H1 (cell line): ENCODE measurements at regions of chr5 and their contacts with region 1.

Region 1: GRCh38 chr5:139765409-139766217 is 30.0 kb upstream of the PSD2 start:
- DNase-seq: peak in 1 of 2 experiments; percentile 97
- H3K4me3 ChIP-seq: peak overlapping the region; percentile 15 to 73 (median 66); a peak in 7 of 8 replicates
- H3K27ac ChIP-seq: no peak overlapping the region
- H3K4me1 ChIP-seq: peaks cover 9 to 32% (median 15%) of the 10 kb centered on the region in 4 experiments
- H3K27me3 ChIP-seq: peaks cover 8 to 36% (median 26%) of the 10 kb centered on the region in 4 experiments
- CTCF ChIP-seq: peak in 2 of 3 experiments; percentile 65 to 75; a peak in 3 of 4 replicates
- EP300 ChIP-seq: no peak
- POLR2A ChIP-seq: no peak
- RAD21 ChIP-seq: peak; percentile 66 to 71

Region 2: DNA sequence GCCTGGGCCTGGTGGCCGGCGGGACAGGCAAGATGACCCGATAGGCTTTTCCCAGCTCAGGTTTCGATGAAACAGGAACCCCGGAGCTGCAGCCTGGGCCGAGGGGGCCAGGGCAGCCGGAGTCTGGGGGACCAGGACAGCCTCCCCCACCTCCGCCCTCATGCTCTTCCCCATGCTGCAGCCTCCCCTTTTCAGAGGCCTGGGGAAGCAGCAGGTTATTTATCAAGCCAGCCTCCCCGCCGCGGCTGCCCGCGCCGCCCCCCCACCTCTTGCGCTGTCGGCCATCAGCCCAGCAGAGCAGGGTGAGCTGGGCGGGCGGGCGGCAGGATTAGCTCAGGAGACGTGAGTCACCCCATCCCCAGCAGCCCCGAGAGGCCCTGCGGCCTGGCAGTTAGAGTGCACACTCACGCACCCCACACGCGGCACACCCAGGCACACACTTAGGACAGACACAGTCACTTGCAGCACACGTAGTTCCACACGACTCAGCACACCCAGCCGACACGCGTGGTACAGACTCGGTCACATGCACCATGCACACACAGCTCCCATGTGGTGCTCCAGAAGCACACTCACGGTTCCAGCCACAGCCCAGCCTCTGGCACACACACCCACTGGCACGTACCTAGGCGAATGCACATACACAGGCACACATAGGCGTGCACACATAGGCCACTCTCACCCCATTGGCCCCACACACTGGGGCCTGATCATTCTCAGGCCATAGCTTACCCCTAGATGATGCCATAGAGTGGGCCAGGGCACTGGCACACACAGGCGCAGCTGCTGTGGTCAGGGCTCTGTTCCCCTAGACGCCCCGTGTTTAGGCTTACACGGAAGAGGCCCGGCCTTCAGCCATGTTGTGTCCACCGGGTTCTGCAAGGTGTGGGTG is 104.4 kb before region 1 on chr5:
- CTCF ChIA-PET with region 1: interaction called, 24 read pairs
- POLR2A ChIA-PET with region 1: interaction called, 3 read pairs
- DNase-seq: no peak
- H3K4me3 ChIP-seq: no peak overlapping the region
- H3K27ac ChIP-seq: 0 out of 2 replicates have a peak overlapping the region, but pooled peaks have one; percentile 32
- H3K4me1 ChIP-seq: peaks cover 13 to 55% (median 46%) of the 10 kb centered on the region in 4 experiments
- H3K27me3 ChIP-seq: no peaks in the 10 kb centered on the region
- CTCF ChIP-seq: no peak
- EP300 ChIP-seq: no peak
- POLR2A ChIP-seq: no peak
- RAD21 ChIP-seq: no peak

Region 3: DNA sequence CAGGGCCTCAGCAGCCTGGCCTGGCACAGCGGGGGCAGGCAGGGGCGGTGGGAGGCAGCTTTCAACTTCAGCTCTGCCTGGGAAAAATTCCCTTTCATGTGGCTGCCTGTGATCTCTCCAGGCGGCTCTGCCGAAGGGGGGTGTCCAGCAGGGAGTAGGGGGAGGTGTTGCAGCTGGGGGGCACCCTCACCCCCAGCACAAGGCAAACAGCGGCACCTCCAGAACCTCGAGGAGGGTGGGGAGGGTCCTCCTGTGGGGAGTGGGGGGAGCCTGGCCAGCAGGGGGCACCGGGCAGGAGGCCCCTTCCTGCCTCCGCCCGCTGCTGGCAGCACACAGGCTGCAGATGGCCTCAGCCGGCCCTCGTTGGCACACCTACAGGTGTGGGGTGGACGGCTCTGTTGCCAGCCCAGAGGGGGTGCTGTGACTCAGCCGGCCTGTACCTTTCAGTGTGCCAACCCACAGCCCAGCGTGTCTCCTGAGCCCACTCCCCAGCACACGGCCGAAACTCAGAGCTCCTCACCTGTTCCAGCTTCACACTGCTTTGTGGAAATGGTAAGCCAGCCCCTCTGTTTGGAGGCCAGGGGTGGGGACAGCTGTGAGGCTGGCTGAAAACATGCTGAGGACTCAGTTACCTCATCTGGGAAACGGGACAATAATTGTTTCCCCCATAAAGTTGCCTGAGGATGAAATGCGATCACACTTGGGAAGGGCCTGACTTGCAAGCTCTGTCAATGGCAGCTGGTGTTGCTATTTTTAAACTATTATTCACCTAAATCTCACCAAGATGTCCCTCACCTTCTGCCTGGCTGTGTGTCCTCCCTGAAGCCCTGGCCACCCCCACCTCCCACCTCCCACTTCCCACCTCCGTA is 80.5 kb before region 1 on chr5:
- CTCF ChIA-PET with region 1: interaction called, 23 read pairs
- POLR2A ChIA-PET with region 1: interaction called, 4 read pairs
- DNase-seq: no peak
- H3K4me3 ChIP-seq: no peak overlapping the region
- H3K27ac ChIP-seq: no peak overlapping the region
- H3K4me1 ChIP-seq: peaks cover 37 to 67% (median 57%) of the 10 kb centered on the region in 4 experiments
- H3K27me3 ChIP-seq: no peaks in the 10 kb centered on the region
- CTCF ChIP-seq: peak in 1 of 3 experiments; percentile 27; a peak in 2 of 4 replicates
- EP300 ChIP-seq: no peak
- POLR2A ChIP-seq: no peak
- RAD21 ChIP-seq: peak in 1 of 2 experiments; percentile 25; a peak in 2 of 4 replicates

Region 4: DNA sequence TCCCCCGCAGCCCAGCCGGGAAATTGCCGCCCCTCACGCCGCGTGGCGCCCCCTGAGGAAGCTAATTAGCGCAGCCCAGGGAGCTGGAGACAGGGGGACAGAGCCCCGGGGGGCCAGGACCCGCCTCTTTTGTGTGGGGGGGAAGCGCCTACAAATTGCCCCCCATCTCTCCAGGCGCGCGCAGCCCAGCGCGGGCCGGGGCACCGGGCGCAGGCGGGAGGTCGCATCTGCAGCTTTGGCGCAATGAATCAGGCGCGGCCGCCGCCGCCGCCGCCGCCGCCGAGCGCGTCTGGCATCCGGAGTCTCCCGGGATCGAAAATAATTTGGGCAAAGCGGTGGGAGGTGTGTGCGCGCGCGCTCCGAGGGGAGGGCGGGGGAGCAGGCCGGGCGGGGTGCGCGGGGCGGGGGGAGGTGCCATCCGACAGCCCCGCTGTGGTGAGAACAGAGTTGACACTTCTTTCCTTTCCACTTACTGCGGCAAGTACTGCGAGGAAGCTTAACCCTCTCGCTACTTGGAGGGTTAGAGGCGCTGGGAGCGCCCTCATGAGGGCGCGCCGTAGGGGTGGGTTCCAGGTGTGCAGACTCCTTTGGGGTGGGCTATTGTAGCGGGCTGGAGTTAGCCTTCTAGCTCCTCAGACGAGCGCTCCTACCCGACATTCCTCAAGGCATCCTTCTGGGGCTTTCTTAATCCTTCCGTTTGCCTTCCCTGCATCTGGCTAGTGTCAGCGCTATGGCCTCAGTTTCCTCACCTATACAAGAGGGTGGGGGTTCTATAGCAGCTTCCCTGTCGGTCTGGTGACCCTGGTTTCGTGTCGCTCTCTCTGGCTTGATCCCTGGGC is 54.3 kb before region 1 on chr5:
- CTCF ChIA-PET with region 1: interaction called, 31 read pairs
- POLR2A ChIA-PET with region 1: interaction called, 4 read pairs
- DNase-seq: peak in 1 of 2 experiments; percentile 82
- H3K4me3 ChIP-seq: peak overlapping the region; percentile 40 to 79 (median 54)
- H3K27ac ChIP-seq: 0 out of 2 replicates have a peak overlapping the region, but pooled peaks have one; percentile 14
- H3K4me1 ChIP-seq: peaks cover 13 to 34% (median 24%) of the 10 kb centered on the region in 4 experiments
- H3K27me3 ChIP-seq: peaks cover 0 to 11% (median 9%) of the 10 kb centered on the region in 4 experiments; a peak in 4 of 7 replicates
- CTCF ChIP-seq: peak in 2 of 3 experiments; percentile 35 to 36; a peak in 3 of 4 replicates
- EP300 ChIP-seq: 0 out of 3 replicates have a peak, but pooled peaks of 1 of the 2 experiments have one; percentile 29
- POLR2A ChIP-seq: peak in 1 of 2 experiments; percentile 40; a peak in 1 of 3 replicates
- RAD21 ChIP-seq: peak; percentile 28 to 61; a peak in 3 of 4 replicates

Region 5: DNA sequence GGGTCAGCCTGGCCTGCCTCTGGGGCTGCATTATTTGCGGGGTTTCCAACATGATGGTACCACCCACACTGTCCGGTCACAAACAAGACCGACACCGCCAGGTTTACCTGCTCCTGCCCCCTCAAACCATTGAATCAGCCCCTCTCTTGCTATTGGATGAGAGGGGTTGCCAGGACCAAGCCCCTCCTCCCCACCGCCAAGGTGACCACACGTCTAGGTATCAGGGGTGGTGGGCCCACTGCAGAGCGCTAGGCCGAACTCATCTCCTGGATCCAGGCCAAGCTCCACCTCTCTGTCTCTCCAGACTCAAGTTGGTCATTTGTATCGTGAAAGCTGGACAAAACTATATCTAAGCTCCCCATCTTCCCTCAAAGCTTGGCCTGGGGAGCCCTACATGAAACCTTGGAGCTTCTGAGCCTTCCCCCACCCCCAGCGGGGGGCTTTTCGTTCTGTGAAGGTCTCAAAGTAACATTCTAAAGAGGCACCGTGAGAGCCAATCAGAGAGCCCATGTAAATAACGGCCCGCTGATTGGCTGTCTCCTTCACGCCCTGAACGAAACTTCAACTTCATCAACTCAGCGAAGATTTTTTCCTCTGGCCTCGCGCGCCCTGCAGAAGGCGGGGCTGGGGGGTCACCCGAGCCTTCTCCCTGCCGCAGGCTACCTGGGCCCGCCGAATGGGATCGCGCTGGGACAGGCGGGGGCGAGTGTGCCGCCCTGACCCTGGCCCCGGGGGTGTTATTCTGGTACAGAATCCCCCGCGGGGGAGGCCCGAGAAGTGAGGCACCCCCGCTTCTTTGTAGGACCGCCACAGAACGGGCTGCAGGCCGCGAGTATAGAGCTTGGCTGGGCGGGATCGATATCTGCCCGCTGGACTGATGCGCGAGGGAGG is 19.6 kb before region 1 on chr5:
- CTCF ChIA-PET with region 1: interaction called, 81 read pairs
- POLR2A ChIA-PET with region 1: interaction called, 11 read pairs
- DNase-seq: peak; percentile 75 to 89
- H3K4me3 ChIP-seq: peak overlapping the region; percentile 30 to 64 (median 56)
- H3K27ac ChIP-seq: no peak overlapping the region
- H3K4me1 ChIP-seq: peaks cover 3 to 44% (median 29%) of the 10 kb centered on the region in 4 experiments
- H3K27me3 ChIP-seq: peaks cover 24 to 50% (median 42%) of the 10 kb centered on the region in 4 experiments
- CTCF ChIP-seq: no peak
- EP300 ChIP-seq: no peak
- POLR2A ChIP-seq: no peak
- RAD21 ChIP-seq: no peak

Region 6: GRCh38 chr5:139817362-139817761 is 51.7 kb after region 1 on chr5:
- CTCF ChIA-PET with region 1: no interaction called
- POLR2A ChIA-PET with region 1: no interaction called
- DNase-seq: no peak
- H3K4me3 ChIP-seq: no peak overlapping the region
- H3K27ac ChIP-seq: no peak overlapping the region
- H3K4me1 ChIP-seq: peaks cover 0 to 2% (median under 1%) of the 10 kb centered on the region in 4 experiments; a peak in 3 of 7 replicates
- H3K27me3 ChIP-seq: peaks cover 0 to 2% (median 0%) of the 10 kb centered on the region in 4 experiments; a peak in 1 of 7 replicates
- CTCF ChIP-seq: no peak
- EP300 ChIP-seq: no peak
- POLR2A ChIP-seq: no peak
- RAD21 ChIP-seq: no peak